Heart left ventricle (tissue), 16 donors: ENCODE measurements at regions of chrX and their contacts with region 1.

Region 1: GRCh38 chrX:132651421-132652086 is 162.7 kb upstream of the MBNL3 start:
- DNase-seq: no peak
- ATAC-seq: no peak
- H3K4me3 ChIP-seq: no peak overlapping the region
- H3K27ac ChIP-seq: no peak overlapping the region
- H3K4me1 ChIP-seq: no peaks in the 10 kb centered on the region
- H3K27me3 ChIP-seq: peaks cover 0 to 23% (median 0%) of the 10 kb centered on the region in 9 donors
- CTCF ChIP-seq: no peak
- POLR2A ChIP-seq: no peak

Region 2: GRCh38 chrX:132209527-132209926 is 442.0 kb before region 1 on chrX:
- intact Hi-C with region 1: no loop called
- DNase-seq: no peak
- ATAC-seq: peak in 1 of 4 donors; percentile 72
- H3K4me3 ChIP-seq: no peak overlapping the region
- H3K27ac ChIP-seq: no peak overlapping the region
- H3K4me1 ChIP-seq: peaks cover 0 to 70% (median 20%) of the 10 kb centered on the region in 12 donors
- H3K27me3 ChIP-seq: peaks cover 0 to 4% (median 0%) of the 10 kb centered on the region in 9 donors
- CTCF ChIP-seq: no peak
- POLR2A ChIP-seq: no peak

Region 3: GRCh38 chrX:132968296-132968949 is 316.9 kb after region 1 on chrX:
- intact Hi-C with region 1: loop called in 1 of 10 experiments (anchors 10 kb)
- DNase-seq: no peak
- ATAC-seq: no peak
- H3K4me3 ChIP-seq: no peak overlapping the region
- H3K27ac ChIP-seq: no peak overlapping the region
- H3K4me1 ChIP-seq: no peaks in the 10 kb centered on the region
- H3K27me3 ChIP-seq: peaks cover 0 to 42% (median 0%) of the 10 kb centered on the region in 9 donors
- CTCF ChIP-seq: no peak
- POLR2A ChIP-seq: no peak